ENCODE measurements at regions of chr1 and their contacts with region 1.

Region 1: GRCh38 chr1:39672551-39672947 is 642 bp upstream of the NT5C1A start:
- DNase-seq: peak; percentile 61
- CTCF ChIP-seq: peak; percentile 55

Region 2: DNA sequence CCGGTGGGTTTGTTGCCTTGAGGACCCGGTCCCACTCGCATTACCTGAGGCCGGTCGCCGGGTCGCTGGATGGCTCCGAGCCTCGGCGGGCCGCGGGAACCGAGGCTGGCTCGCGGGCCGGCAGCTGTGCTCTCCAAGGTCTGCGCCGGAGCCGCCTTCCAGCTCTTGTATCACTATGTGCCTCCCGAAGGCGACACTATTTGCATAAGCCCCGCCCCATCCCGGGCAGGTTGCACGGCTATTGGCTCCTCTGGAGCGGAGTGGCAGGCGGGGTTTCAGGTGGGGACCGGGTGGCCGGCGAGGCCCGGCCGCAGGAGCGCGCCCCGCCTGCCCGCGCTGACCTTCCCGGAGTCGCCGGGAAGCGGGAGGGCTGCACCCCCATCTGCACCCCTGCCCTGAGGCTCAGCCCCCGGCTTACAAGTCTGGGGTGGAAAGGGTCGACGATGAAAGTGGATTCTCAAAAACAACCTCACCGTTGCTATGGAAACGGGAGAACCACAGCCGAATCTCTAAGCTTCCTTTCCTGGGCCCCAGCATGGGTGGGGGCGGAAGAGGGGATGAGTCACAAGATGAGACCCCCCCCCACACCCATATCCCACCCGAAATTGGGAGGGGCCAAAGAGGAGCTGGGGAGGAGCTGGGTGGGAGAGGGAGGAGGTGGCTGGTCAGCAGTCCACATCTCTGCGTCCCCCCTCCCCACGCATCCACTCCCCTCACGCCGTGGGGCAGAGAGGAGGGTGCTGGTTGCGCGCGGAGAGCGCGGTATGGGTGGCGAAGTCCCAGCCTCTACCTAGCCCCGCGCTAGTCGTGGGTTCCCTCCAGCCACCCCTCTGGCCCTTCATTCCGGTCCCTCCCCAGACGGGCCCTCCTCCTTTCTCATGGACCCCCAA is 19.0 kb after region 1 on chr1 and contains the start of gene HPCAL4:
- CTCF ChIA-PET with region 1: interaction called, 14 read pairs
- POLR2A ChIA-PET with region 1: no interaction called
- DNase-seq: peak; percentile 85
- CTCF ChIP-seq: no peak

Region 3: DNA sequence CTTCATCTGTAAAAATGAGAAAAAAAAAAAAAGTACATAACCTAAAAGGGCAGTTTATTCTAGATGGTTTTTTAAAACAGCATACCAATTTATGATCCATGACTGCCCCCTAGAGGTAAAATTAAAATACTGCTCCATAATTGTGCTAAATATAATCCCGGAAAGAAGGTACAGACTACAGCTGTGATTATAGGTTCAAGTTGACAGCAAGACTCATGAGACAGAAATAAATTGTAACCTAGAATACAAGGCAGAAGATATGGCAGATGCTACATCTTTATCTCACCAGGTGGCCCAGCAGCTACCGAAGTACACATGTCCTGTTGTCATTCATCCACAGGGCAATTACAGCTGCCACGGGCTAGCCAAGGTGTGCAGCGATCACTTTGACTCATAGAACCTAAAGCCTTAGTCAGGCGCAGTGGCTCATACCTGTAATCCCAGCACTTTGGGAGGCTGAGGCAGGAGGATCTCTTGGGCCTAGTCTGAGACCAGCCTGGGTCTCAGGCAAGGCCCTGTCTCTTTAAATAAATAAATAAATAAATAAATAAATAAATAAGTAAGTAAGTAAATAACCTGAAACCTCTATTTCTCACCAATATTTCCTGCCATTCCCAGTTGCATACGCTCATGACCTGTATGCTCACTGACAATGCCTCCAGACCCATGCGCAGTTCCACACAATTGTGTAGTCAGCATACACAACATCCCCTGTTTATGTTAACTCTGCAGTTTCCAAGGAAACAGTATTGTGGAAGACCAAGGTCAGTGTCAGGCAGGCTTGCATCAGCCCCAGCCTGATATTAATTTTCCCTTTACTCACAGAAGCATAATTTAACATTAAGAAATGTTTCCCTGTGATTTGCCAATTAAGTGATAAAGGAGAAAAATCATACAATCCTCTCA is 47.8 kb after region 1 on chr1:
- CTCF ChIA-PET with region 1: interaction called, 11 read pairs
- POLR2A ChIA-PET with region 1: no interaction called
- DNase-seq: peak; percentile 47
- CTCF ChIP-seq: peak; percentile 51

Measured in GM10248 (cell line).